CD4-positive, alpha-beta T cell (primary cell): ENCODE measurements at regions of chr17 and their contacts with region 1.

Region 1: GRCh38 chr17:7234083-7234951 is at the start of gene DVL2:
- DNase-seq: peak; percentile 89 to 97 (median 92)
- ATAC-seq: peak; percentile 56
- H3K4me3 ChIP-seq: peak within 1 kb of the TSS; percentile 97
- H3K4me3 Mint-ChIP-seq: peak within 1 kb of the TSS; percentile 94
- H3K27ac ChIP-seq: peak within 1 kb of the TSS; percentile 61 to 81
- H3K27ac Mint-ChIP-seq: peak within 1 kb of the TSS; percentile 92
- H3K4me1 ChIP-seq: peaks cover 60% of the 10 kb centered on the region
- H3K4me1 Mint-ChIP-seq: peaks cover 46% of the 10 kb centered on the region
- H3K27me3 ChIP-seq: no peaks in the 10 kb centered on the region
- H3K27me3 Mint-ChIP-seq: no peaks in the 10 kb centered on the region
- CTCF ChIP-seq: no peak
- total RNA-seq, gene DVL2: 40.9 to 41.3 TPM

Region 2: DNA sequence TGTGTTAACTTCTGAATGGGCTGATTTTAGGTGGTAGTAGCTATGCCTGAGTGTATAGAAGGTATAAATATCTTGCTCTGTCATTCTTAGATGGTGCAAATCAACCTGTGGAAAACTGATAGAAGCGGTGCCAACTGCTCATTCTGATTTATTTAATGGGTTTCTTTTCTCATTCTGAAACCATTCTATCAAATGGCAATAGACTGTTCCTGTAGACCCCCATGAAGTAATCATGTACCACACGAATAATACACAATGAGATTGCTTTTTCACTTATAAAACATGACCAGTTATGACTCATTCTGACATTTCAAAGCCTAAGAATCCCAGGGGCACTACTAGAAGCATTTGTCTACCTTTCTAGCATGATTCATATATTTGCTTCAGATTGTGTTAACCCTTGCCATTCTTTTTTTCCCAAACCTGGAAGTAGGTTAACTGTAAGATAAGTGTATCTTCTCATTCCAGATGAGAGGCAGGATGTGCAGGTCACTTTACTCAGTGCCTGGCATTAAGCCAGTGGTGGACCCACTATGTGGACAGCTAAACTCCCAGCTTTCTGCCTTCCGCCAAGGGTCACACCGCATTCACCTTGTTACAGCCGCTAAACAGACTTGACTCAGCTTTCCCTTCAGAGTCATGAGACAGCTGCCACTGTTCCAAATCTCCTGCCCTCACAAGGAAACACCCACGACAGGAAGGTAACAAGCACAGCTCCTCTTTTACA is 174.0 kb before region 1 on chr17:
- CTCF ChIA-PET with region 1: no interaction called
- POLR2A ChIA-PET with region 1: no interaction called
- intact Hi-C with region 1: no loop called
- DNase-seq: peak in 1 of 14 experiments; percentile 17
- ATAC-seq: no peak
- H3K4me3 ChIP-seq: no peak overlapping the region
- H3K4me3 Mint-ChIP-seq: no peak overlapping the region
- H3K27ac ChIP-seq: no peak overlapping the region
- H3K27ac Mint-ChIP-seq: no peak overlapping the region
- H3K4me1 ChIP-seq: no peaks in the 10 kb centered on the region
- H3K4me1 Mint-ChIP-seq: no peaks in the 10 kb centered on the region
- H3K27me3 ChIP-seq: no peaks in the 10 kb centered on the region
- H3K27me3 Mint-ChIP-seq: peaks cover 19% of the 10 kb centered on the region
- CTCF ChIP-seq: no peak

Region 3: DNA sequence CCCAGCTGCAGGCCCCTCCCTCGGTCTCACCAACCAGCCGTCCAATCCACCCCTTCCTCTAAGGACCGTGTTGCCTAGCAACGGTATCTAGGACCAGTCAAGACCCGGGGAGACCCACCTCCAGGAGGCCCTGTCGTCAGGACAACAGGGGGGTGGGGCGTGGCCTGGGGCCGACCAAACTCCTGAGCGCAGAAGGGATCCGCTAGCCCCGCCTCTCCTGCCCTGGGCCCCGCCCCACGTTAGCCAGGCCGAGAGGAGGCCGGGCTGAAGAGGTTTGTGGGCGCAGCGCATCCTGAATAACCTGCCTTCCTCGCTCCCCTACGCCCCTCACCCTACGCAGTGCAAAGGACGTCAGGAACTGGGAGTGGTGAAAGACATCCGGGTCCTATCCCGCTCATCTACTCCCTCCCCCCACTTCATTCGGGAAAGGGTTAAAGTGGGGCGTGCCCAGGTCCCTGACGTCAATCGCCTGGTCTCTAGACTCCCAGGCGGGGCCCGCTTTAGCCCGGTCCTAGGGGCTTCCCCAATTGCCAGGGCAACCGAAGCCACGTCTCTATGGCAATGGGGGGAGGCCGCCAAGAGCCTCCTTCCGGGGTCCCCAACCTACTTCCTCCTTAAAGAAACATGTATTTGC is 29.4 kb before region 1 on chr17:
- CTCF ChIA-PET with region 1: no interaction called
- POLR2A ChIA-PET with region 1: interaction called, 4 read pairs
- intact Hi-C with region 1: loop called in 1 of 2 experiments (anchors 1 kb)
- DNase-seq: peak; percentile 84 to 99 (median 94)
- ATAC-seq: peak; percentile 81
- H3K4me3 ChIP-seq: peak overlapping the region; percentile 66
- H3K4me3 Mint-ChIP-seq: peak overlapping the region; percentile 83
- H3K27ac ChIP-seq: peak overlapping the region; percentile 86 to 95
- H3K27ac Mint-ChIP-seq: peak overlapping the region; percentile 87
- H3K4me1 ChIP-seq: peaks cover 31% of the 10 kb centered on the region
- H3K4me1 Mint-ChIP-seq: peaks cover 36% of the 10 kb centered on the region
- H3K27me3 ChIP-seq: no peaks in the 10 kb centered on the region
- H3K27me3 Mint-ChIP-seq: no peaks in the 10 kb centered on the region
- CTCF ChIP-seq: no peak

Region 4: GRCh38 chr17:7219812-7220581 is 14.3 kb before region 1 on chr17 and contains the starts of genes ACADVL and DLG4:
- CTCF ChIA-PET with region 1: interaction called, 19 read pairs
- POLR2A ChIA-PET with region 1: interaction called, 234 read pairs
- intact Hi-C with region 1: loop called in 1 of 2 experiments (anchors 1 kb)
- DNase-seq: peak; percentile 53 to 86 (median 74)
- ATAC-seq: peak; percentile 50
- H3K4me3 ChIP-seq: peak within 1 kb of the TSS; percentile 70
- H3K4me3 Mint-ChIP-seq: peak within 1 kb of the TSS; percentile 95
- H3K27ac ChIP-seq: peak within 1 kb of the TSS; percentile 75 to 79
- H3K27ac Mint-ChIP-seq: peak within 1 kb of the TSS; percentile 76
- H3K4me1 ChIP-seq: peaks cover 61% of the 10 kb centered on the region
- H3K4me1 Mint-ChIP-seq: peaks cover 54% of the 10 kb centered on the region
- H3K27me3 ChIP-seq: no peaks in the 10 kb centered on the region
- H3K27me3 Mint-ChIP-seq: no peaks in the 10 kb centered on the region
- CTCF ChIP-seq: no peak
- total RNA-seq, gene ACADVL: 237 to 257 TPM
- total RNA-seq, gene DLG4: 10.2 to 11.0 TPM

Region 5: DNA sequence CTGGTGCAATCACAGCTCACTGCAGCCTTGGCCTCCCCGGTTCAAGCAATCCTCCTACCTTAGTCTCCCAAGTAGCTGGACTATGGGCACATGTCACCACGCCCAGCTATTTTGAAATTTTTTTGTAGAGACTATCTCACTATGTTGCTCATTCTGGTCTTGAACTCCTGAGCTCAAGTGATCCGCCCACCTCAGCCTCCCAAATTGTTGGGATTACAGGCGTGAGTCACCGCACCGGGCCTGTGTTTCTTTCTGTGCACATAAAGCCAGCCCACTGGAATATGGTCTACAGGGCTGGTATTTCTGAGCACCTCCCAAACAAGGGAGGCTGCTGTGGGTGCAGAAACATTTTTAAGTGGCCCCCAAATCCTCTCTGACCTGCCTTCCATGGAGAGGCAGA is 129.0 kb after region 1 on chr17:
- CTCF ChIA-PET with region 1: no interaction called
- POLR2A ChIA-PET with region 1: no interaction called
- intact Hi-C with region 1: no loop called
- DNase-seq: no peak
- ATAC-seq: no peak
- H3K4me3 ChIP-seq: no peak overlapping the region
- H3K4me3 Mint-ChIP-seq: no peak overlapping the region
- H3K27ac ChIP-seq: no peak overlapping the region
- H3K27ac Mint-ChIP-seq: no peak overlapping the region
- H3K4me1 ChIP-seq: no peaks in the 10 kb centered on the region
- H3K4me1 Mint-ChIP-seq: no peaks in the 10 kb centered on the region
- H3K27me3 ChIP-seq: no peaks in the 10 kb centered on the region
- H3K27me3 Mint-ChIP-seq: peaks cover 3% of the 10 kb centered on the region
- CTCF ChIP-seq: no peak